AG04449 (cell line): ENCODE measurements at regions of chr3 and their contacts with region 1.

Region 1: DNA sequence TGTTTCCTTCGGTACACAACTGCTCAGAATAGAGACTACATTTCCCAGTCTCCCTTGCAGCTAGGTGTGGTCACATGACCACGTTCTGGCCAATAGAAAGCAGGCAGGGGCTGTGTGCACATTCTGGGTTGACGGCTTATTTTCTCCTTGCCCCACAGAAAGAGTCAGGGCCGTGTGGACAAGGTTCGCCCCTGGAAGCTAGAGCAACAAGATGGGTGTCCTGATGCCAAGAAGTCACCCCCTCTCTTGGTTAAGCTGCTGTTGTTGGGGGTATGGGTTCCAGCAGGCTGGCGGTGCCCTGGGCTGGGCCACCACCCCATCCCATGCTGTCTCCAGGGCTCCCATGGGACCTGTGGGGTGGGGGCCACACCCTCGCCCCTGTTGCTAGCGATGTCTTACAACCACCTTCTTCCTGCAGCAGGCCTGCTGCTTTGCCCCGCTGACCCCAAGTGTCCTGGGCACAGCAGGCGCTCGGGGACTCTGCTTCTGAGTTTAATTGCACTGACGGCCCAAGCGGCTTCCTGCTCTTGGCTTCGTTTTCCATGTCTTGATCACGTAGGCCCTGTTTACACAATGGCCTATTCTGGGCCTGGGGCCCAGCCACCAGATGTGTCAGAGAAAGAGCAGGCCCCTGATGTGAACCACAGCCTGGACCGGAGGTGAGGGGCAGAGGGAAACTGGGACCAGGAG is 24.9 kb downstream of the ABTB1 start:
- DNase-seq: no peak
- H3K4me3 ChIP-seq: peak overlapping the region; percentile 21; the same call in 1 of the 2 replicates
- CTCF ChIP-seq: no peak

Region 2: DNA sequence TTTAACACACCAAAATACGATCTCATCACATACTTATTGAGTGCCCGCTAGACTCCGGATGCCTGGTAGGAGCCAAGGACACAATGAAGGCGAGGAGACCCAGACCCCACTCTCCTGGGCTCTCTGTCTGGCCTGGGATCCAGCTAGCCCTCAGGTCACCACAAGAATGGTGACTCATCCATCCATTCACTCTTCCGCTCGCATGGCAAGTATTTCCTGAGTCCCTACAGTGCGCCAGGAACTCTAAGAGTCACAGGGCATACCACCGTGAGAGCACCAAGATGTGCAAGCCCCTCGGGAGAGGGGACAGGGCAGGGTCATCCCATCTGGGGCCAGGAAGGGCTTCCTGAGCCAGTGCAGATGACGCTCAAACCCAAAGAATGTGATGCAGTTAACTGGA is 308.3 kb before region 1 on chr3:
- CTCF ChIA-PET with region 1: no interaction called
- POLR2A ChIA-PET with region 1: no interaction called
- DNase-seq: no peak
- H3K4me3 ChIP-seq: no peak overlapping the region
- CTCF ChIP-seq: no peak

Region 3: DNA sequence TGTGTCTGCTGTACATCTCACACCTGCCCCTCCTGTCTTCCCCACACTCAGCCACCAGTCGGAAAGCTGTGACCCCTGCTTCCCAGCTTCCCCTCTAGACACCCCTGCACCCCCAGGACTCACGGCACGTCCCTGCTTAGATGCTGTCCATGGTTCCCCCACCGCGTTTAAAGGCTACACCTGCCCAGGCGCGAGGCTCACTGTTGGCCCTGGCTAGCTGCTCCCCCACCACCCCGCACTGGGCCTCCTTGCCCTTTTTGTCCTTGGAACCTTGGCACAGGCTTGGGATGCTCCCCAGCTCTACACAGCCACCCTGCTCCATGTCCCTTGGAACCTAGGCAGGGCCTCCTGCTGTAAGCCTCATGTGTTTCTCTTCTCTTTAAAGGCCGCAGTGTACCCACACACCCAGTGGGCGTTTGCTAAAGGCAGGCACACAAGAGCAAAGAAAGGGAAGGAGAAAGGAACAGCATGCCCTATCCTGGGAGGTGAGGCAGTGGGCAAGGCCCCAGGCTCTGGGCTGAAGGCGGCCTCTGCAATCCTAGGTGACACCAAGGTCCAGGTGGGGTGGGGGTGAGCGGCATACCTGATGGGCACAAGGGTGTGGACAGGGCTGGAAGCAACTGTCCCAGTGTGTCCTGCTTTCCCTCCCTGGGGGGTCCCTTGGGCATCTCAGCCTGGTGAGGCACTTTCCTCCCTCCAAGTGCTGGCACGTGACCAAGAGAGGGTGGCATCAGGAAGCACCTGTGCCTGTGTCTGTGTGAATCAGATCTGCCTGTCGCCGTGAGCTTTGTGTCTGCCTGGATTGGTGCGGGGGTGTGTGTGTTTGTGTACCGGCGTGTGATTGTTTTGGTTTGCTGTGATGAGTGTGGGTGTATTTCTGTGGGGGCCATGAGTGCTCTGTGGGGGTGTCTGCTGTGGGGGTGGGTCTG is 161.5 kb before region 1 on chr3:
- CTCF ChIA-PET with region 1: no interaction called
- POLR2A ChIA-PET with region 1: no interaction called
- DNase-seq: no peak
- H3K4me3 ChIP-seq: no peak overlapping the region
- CTCF ChIP-seq: no peak

Region 4: GRCh38 chr3:127628788-127629466 is 68.8 kb before region 1 on chr3 and contains the start of gene PODXL2:
- CTCF ChIA-PET with region 1: no interaction called
- POLR2A ChIA-PET with region 1: no interaction called
- DNase-seq: no peak
- H3K4me3 ChIP-seq: peak within 1 kb of the TSS; percentile 51
- CTCF ChIP-seq: no peak

Region 5: DNA sequence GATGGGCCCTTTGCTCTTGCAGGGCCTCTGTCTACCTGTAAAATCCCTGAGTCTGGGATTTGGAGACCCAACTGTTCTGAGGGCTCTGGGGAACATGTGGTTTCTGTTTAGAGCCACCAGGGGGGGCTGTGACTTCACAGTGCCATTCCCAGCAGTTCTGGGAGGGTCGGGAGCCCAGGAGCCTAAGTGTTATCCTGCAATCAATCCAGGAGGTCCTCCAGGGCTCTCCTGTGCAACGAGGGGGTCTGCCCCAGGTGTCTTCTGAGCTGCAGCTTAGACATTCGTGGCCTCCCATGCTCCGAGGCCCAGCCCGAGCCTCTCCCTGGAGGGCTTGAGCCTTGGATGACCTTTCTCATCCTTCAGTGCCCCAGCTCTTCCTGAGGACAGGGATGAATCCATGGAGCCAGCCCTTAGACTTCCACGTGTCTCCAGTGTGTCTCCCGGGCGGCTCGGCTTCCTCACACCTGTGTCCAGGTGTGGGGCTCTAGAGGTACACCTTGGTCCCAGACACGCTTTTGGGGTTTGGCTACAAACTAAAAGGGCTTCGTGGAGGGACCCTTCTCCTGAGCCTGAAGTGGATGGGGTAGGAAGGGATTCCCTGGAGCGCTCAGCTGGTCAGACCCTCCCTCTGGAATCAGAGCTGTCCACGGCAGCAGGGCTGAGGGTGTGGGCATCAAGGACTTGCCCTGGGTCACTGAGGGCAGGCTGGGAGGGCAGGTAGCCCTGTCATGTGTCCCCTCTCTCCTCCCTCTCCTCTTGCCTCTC is 45.3 kb before region 1 on chr3:
- CTCF ChIA-PET with region 1: interaction called, 21 read pairs
- POLR2A ChIA-PET with region 1: no interaction called
- DNase-seq: no peak
- H3K4me3 ChIP-seq: no peak overlapping the region
- CTCF ChIP-seq: peak; percentile 81

Region 6: GRCh38 chr3:127717357-127718244 is 19.9 kb after region 1 on chr3:
- CTCF ChIA-PET with region 1: interaction called, 28 read pairs
- POLR2A ChIA-PET with region 1: no interaction called
- DNase-seq: no peak
- H3K4me3 ChIP-seq: no peak overlapping the region
- CTCF ChIP-seq: no peak

Region 7: DNA sequence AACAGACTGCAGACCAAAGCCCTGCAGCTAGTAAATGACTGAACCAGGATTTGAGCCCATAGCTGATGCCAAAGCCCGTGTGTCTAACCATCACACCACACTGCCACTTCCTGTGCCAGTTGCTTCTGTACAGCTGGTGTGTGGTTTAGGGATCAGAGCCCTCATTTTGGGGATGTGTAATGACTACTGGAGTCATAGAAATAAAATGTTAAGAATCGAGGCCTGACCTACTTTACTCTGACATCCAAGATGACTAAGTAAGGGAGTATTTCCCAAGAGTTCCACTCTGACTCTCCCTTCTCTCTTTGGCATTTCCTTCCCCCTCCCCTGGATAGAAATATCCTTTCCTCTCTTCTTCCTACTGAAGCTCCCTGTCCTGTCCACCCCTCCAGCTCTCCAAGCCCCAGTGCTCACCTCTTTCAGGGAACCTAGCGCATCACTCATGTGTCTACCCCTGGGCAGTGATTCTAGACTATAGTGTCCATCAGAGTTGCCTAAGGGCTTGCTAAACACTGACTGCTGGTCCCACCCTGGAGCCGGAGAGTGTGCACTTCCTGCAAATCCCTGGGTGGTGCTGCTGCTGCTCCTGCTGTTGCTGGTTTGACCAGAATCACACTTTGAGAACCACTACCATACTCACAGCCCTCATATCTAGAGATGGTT is 70.8 kb after region 1 on chr3:
- CTCF ChIA-PET with region 1: interaction called, 15 read pairs
- POLR2A ChIA-PET with region 1: no interaction called
- DNase-seq: peak; percentile 93
- H3K4me3 ChIP-seq: no peak overlapping the region; the same call in 1 of the 2 replicates
- CTCF ChIP-seq: no peak

Region 8: DNA sequence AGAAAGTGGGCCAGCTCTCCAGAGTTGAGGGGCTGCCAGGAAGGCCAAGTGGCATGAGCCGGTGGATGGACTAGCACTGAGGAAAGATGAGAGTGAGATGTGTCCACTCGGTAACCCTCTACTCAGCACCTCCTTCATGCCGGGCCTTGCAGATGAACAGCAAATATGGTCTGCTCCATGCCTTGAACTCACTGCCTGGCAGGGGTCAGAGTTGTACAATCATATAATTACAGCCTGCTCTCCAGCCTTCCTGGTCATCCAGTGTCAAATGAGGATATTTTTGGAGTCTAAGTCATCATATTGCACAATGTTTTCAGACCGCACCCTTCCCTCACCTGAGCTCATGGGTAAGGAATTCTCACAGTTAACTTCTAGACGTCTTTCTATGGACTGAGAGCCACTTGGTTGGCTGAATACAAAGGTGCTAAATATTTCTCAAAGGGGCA is 119.7 kb after region 1 on chr3:
- CTCF ChIA-PET with region 1: interaction called, 18 read pairs
- POLR2A ChIA-PET with region 1: interaction called, 7 read pairs
- DNase-seq: no peak
- H3K4me3 ChIP-seq: no peak overlapping the region
- CTCF ChIP-seq: no peak

Region 9: DNA sequence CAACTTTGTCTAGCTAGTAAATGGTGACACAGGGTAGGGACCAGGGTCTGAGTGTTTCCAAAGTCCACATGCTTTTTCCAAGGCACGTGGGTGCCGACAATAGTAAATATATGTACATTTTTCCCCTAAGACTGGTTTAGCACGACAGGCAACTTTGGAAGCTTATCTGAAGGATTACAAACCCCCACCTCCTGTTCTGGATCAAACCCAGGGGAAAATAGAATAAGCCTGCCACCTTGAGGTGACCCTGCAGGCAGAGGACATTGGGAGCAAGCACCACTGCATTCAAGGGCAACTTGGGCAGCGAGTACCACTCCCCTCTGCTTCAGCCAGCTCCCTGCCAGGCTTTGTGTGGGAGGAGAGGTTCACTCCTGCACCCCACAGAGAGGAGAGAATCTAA is 262.1 kb after region 1 on chr3:
- CTCF ChIA-PET with region 1: interaction called, 11 read pairs
- POLR2A ChIA-PET with region 1: no interaction called
- DNase-seq: no peak
- H3K4me3 ChIP-seq: no peak overlapping the region
- CTCF ChIP-seq: no peak

Region 10: GRCh38 chr3:128278761-128279600 is 581.3 kb after region 1 on chr3:
- CTCF ChIA-PET with region 1: no interaction called
- POLR2A ChIA-PET with region 1: no interaction called
- DNase-seq: peak; percentile 73
- H3K4me3 ChIP-seq: peak overlapping the region; percentile 8; the same call in 1 of the 2 replicates
- CTCF ChIP-seq: peak; percentile 16